ENCODE measurements at regions of chr19 and their contacts with region 1.

Region 1: GRCh38 chr19:52941941-52942385 is 18.7 kb upstream of the ZNF888 start:
- DNase-seq: peak; percentile 12
- CTCF ChIP-seq: no peak

Region 2: DNA sequence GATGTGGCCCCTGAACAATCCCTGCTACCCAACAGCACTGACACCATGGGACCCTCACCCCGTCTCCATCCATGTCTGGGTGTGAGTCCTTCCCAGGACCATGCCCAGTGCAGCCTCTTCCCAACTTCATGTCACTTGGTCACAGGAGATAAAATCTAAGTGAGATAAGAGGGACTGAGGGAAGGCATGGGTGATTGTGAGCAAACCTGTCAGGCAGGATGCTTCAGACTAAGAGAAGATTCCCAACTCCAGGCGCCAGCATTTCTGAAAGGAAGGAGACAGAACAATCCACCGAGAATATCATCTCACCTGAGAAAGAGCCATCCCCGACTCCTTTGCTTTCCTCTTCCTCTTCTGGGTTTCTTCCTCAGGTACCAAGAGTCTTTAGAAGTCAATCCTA is 52.0 kb before region 1 on chr19:
- CTCF ChIA-PET with region 1: no interaction called
- POLR2A ChIA-PET with region 1: interaction called, 11 read pairs
- DNase-seq: no peak
- CTCF ChIP-seq: no peak

Region 3: DNA sequence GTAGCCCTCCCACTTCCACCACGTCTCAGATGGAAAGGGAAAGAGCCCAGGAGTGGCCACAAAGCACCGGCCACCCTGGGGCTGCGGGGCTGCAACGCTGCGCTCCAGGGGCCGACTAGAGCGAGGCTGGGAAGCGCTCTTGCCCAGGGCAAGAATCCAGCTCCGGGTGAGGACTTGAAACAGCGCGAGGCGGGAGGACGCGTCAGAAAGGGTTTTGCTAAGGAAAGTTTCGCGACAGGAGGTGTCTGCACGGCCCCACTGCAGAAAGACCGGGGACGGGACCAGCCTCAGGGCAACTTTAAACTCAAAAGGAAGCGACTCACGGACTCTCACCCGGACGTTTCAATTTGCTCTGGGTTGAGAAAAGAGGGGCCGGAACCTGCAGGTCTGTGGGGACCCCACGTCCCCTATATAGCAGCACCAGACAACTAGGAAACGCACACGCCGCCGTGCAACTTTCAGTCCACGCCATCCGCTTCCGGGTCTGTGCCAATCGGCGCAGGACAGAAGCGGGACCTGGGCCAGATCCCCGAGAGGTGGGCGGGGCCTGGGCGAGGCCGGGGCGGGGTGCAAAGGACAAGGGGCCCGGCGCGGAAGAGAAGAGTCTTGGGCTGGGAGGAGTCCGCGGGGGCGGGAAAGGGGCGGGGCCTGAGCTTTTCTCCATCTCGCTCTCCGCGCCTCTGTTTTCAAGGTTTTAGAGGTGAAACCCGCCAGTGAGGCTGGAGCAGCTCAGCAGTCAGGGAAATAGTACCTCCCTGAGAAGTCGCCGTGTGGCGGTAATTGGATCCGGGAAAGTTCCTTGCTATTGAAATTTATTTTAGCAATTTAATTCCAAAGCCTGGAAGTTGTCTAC is 20.7 kb after region 1 on chr19 and contains the start of gene ZNF816:
- CTCF ChIA-PET with region 1: interaction called, 11 read pairs
- POLR2A ChIA-PET with region 1: no interaction called
- DNase-seq: peak; percentile 99
- CTCF ChIP-seq: no peak

Measured in GM10248 (cell line).